ENCODE measurements at regions of chrX and their contacts with region 1.

Region 1: DNA sequence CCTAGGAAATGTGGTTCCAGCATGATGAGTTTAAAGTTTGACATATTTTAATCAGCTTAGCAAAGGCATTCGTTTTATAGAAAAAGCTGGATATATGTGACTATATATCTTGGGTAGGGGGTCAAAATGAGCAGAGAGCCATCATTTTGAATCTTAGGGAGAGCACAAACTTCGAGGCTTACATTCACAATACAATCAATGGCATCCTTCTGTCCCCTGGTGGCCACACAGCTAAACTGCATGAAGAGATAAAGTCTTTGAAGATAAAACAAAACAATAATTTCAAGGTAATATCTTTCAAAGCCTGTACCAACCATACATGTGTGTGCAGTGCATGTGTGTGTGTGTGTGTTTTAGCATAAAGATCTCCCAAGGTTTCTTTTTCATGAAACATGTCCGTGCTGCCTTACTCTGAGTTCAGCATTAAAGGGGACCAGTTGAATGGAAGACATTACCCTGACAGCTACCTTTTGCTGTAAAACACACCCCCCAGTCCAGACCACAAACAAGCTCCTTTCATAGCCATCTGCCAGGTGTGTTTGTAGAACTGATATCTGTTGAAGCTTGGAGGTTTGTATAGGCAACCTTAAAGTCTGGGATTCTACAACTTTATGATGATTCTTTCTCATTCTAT is 22.0 kb downstream of the DYNLT3 start:
- DNase-seq: peak; percentile 66
- ATAC-seq: peak; percentile 47
- H3K4me3 Mint-ChIP-seq: no peak overlapping the region
- H3K27ac Mint-ChIP-seq: no peak overlapping the region
- H3K4me1 Mint-ChIP-seq: peaks cover 22% of the 10 kb centered on the region
- H3K27me3 Mint-ChIP-seq: no peaks in the 10 kb centered on the region

Region 2: DNA sequence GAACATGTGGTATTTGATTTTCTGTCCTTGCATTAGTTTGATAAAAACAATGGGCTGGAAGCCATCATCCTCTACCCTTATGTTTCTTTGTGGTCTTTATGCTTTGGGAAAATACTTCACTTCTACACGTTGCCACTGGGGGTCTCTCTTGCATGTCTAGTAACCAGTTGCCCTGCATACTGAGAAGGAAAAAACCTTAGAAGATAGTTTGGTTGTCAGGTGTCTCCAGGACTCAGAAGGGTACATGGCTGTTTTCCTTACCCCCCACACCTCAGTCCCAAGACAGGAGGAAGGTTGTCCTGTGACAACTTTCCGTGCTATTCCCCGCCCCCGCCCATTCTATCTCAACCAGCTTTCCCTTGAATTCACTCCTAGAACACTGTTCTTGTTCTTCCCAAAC is 316.0 kb before region 1 on chrX:
- CTCF ChIA-PET with region 1: interaction called, 3 read pairs
- POLR2A ChIA-PET with region 1: no interaction called
- intact Hi-C with region 1: loop called (anchors 10 kb)
- DNase-seq: no peak
- ATAC-seq: no peak
- H3K4me3 Mint-ChIP-seq: no peak overlapping the region
- H3K27ac Mint-ChIP-seq: no peak overlapping the region
- H3K4me1 Mint-ChIP-seq: no peaks in the 10 kb centered on the region
- H3K27me3 Mint-ChIP-seq: peaks cover 4% of the 10 kb centered on the region

Region 3: GRCh38 chrX:37553466-37553865 is 271.9 kb before region 1 on chrX:
- CTCF ChIA-PET with region 1: no interaction called
- POLR2A ChIA-PET with region 1: no interaction called
- intact Hi-C with region 1: no loop called
- DNase-seq: no peak
- ATAC-seq: no peak
- H3K4me3 Mint-ChIP-seq: no peak overlapping the region
- H3K27ac Mint-ChIP-seq: no peak overlapping the region
- H3K4me1 Mint-ChIP-seq: no peaks in the 10 kb centered on the region
- H3K27me3 Mint-ChIP-seq: no peaks in the 10 kb centered on the region

Region 4: GRCh38 chrX:37578045-37578444 is 247.3 kb before region 1 on chrX:
- CTCF ChIA-PET with region 1: no interaction called
- POLR2A ChIA-PET with region 1: no interaction called
- intact Hi-C with region 1: loop called in 1 of 2 experiments (anchors 2 kb)
- DNase-seq: no peak
- ATAC-seq: no peak
- H3K4me3 Mint-ChIP-seq: no peak overlapping the region
- H3K27ac Mint-ChIP-seq: no peak overlapping the region
- H3K4me1 Mint-ChIP-seq: no peaks in the 10 kb centered on the region
- H3K27me3 Mint-ChIP-seq: peaks cover 6% of the 10 kb centered on the region

Region 5: DNA sequence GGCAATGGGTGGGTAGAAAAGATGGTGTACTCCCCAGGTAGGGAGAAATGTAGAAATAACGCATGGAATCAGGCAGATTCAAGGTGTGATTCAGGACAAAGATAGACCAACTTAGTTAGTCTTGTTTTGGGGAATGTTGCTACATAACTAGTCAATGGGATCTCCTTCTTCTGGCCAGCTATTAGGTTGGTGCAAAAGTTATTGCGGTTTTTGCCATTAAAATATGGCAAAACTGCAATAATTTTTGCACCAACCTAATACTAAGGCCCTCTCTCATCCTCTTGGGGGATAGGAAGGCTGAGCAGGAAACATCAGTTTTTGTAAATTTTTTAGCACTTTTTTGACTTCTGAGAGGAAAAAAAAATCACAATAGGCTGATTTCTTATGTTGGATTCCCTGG is 22.3 kb before region 1 on chrX:
- CTCF ChIA-PET with region 1: interaction called, 10 read pairs
- POLR2A ChIA-PET with region 1: no interaction called
- intact Hi-C with region 1: no loop called
- DNase-seq: no peak
- ATAC-seq: no peak
- H3K4me3 Mint-ChIP-seq: no peak overlapping the region
- H3K27ac Mint-ChIP-seq: no peak overlapping the region
- H3K4me1 Mint-ChIP-seq: no peaks in the 10 kb centered on the region
- H3K27me3 Mint-ChIP-seq: no peaks in the 10 kb centered on the region

Measured in activated CD4-positive, alpha-beta T cell treated with anti-CD3 and anti-CD28 coated beads for 36 hours (primary cell).